MCF 10A (cell line): ENCODE measurements at regions of chr9 and their contacts with region 1.

Region 1: GRCh38 chr9:121609845-121610570 is 41.4 kb upstream of the DAB2IP start:
- DNase-seq: peak; percentile 97
- H3K4me3 Mint-ChIP-seq: no peak overlapping the region
- H3K27ac Mint-ChIP-seq: peak overlapping the region; percentile 51
- H3K4me1 Mint-ChIP-seq: peaks cover 25% of the 10 kb centered on the region
- H3K27me3 Mint-ChIP-seq: no peaks in the 10 kb centered on the region
- CTCF ChIP-seq: no peak

Region 2: DNA sequence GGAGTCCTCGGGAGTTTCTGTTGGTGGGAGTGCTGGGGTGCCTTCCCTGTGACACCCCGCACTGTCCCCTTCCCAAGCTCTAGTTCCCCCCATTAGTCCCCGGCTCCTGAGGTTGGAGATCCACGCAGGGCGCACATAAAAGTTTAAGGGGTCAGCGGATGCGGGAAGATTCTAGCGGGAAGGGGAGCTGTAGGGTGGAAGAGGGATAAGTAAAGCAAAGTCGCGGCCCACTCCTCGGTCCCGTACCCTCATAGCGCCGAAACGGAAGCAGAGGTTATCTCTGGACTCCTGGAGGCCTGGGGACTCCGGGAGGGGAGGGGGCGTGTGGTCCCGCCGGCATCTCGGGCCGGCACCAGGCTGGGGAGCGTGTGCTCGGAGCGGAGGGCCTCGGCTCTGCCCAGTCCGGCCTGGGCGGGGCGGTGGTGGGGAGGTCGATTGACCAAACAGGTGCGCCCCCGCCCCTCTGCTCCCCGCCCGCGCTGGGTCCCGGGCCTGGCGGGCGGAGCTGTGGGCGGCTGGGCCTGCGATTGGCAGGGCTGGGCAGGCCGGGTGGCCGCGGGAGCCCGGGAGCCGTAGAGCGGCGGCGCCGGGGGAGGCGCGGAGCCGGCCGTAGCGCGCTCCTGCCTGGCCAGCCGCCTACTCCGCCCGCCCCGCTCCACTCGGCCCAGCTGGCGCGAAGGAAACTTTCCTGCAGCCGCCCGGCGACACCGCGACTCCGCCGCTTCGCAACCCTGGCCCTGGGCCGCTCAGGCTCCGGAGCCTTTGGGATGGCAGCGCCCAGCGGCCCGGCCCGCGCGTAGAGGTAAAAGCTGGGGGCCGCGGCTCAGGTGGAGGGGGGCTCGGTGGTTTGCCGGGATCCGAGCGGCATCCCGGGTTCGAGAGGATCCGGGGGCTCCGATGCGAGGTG is 10.8 kb before region 1 on chr9:
- CTCF ChIA-PET with region 1: interaction called, 6 read pairs
- POLR2A ChIA-PET with region 1: interaction called, 17 read pairs
- intact Hi-C with region 1: no loop called
- DNase-seq: peak; percentile 47
- H3K4me3 Mint-ChIP-seq: peak overlapping the region; percentile 57
- H3K27ac Mint-ChIP-seq: no peak overlapping the region
- H3K4me1 Mint-ChIP-seq: peaks cover 11% of the 10 kb centered on the region
- H3K27me3 Mint-ChIP-seq: peaks cover 11% of the 10 kb centered on the region
- CTCF ChIP-seq: no peak

Region 3: DNA sequence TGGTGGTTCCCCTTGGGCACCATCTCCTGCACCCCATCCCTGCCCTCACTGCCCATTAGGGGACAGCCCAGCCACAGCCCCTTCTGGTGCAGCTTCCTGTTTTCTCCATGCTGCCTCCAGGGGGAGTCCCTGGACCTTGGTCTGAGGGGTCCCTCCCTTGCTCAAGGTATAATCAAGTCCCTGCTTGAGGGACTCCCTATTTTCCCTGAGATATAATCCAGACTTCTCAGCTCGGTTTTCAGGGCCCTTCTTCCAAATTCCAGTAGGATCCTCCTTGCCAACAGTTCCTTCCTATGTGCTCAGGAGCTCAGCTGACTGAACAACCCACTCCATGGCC is 11.1 kb after region 1 on chr9:
- CTCF ChIA-PET with region 1: interaction called, 14 read pairs
- POLR2A ChIA-PET with region 1: interaction called, 3 read pairs
- intact Hi-C with region 1: no loop called
- DNase-seq: peak; percentile 40
- H3K4me3 Mint-ChIP-seq: no peak overlapping the region
- H3K27ac Mint-ChIP-seq: no peak overlapping the region
- H3K4me1 Mint-ChIP-seq: no peaks in the 10 kb centered on the region
- H3K27me3 Mint-ChIP-seq: no peaks in the 10 kb centered on the region
- CTCF ChIP-seq: peak; percentile 31